HepG2 (cell line): ENCODE measurements at regions of chr22 and their contacts with region 1.

Region 1: GRCh38 chr22:37032546-37033460 is 13.3 kb downstream of the MPST start:
- DNase-seq: peak; percentile 100
- ATAC-seq: peak; percentile 92
- H3K4me3 ChIP-seq: peak overlapping the region; percentile 43 to 69 (median 51)
- H3K27ac ChIP-seq: peak overlapping the region; percentile 99
- H3K4me1 ChIP-seq: peaks cover 89% of the 10 kb centered on the region
- H3K27me3 ChIP-seq: no peaks in the 10 kb centered on the region
- CTCF ChIP-seq: no peak
- EP300 ChIP-seq: peak; percentile 87 to 99; a peak in 3 of 4 replicates
- POLR2A ChIP-seq: peak; percentile 87 to 91
- RAD21 ChIP-seq: 0 out of 2 replicates have a peak, but pooled peaks have one; percentile 3

Region 2: GRCh38 chr22:36823186-36823839 is 209.5 kb before region 1 on chr22:
- CTCF ChIA-PET with region 1: no interaction called
- POLR2A ChIA-PET with region 1: no interaction called
- in situ Hi-C with region 1: no loop called
- intact Hi-C with region 1: no loop called
- DNase-seq: no peak
- ATAC-seq: no peak
- H3K4me3 ChIP-seq: no peak overlapping the region
- H3K27ac ChIP-seq: no peak overlapping the region
- H3K4me1 ChIP-seq: no peaks in the 10 kb centered on the region
- H3K27me3 ChIP-seq: peaks cover 2 to 28% of the 10 kb centered on the region in 2 experiments; a peak in 3 of 5 replicates
- CTCF ChIP-seq: no peak
- EP300 ChIP-seq: no peak
- POLR2A ChIP-seq: no peak
- RAD21 ChIP-seq: no peak

Region 3: GRCh38 chr22:36998620-36999340 is 34.0 kb before region 1 on chr22:
- CTCF ChIA-PET with region 1: no interaction called
- POLR2A ChIA-PET with region 1: no interaction called
- in situ Hi-C with region 1: no loop called
- intact Hi-C with region 1: no loop called
- DNase-seq: no peak
- ATAC-seq: no peak
- H3K4me3 ChIP-seq: no peak overlapping the region
- H3K27ac ChIP-seq: no peak overlapping the region
- H3K4me1 ChIP-seq: peaks cover 6% of the 10 kb centered on the region; the same call in 1 of the 2 replicates
- H3K27me3 ChIP-seq: peaks cover 4 to 32% of the 10 kb centered on the region in 2 experiments; a peak in 4 of 5 replicates
- CTCF ChIP-seq: no peak; the same call in 1 of the 2 replicates
- EP300 ChIP-seq: no peak
- POLR2A ChIP-seq: no peak
- RAD21 ChIP-seq: no peak

Region 4: GRCh38 chr22:37043828-37044538 is 11.2 kb after region 1 on chr22:
- CTCF ChIA-PET with region 1: interaction called, 3 read pairs
- POLR2A ChIA-PET with region 1: interaction called, 227 read pairs
- in situ Hi-C with region 1: no loop called
- intact Hi-C with region 1: loop called (anchors 2 kb)
- DNase-seq: peak; percentile 77
- ATAC-seq: peak; percentile 95
- H3K4me3 ChIP-seq: peak overlapping the region in 2 of 3 experiments; percentile 38 to 62; a peak in 5 of 6 replicates
- H3K27ac ChIP-seq: peak overlapping the region; percentile 78
- H3K4me1 ChIP-seq: peaks cover 84% of the 10 kb centered on the region
- H3K27me3 ChIP-seq: 0 out of 5 replicates have a peak, but pooled peaks cover 0 to under 1% of the 10 kb centered on the region in 2 experiments
- CTCF ChIP-seq: peak; percentile 97
- EP300 ChIP-seq: peak in 1 of 2 experiments; percentile 4; a peak in 2 of 4 replicates
- POLR2A ChIP-seq: peak in 1 of 2 experiments; percentile 62; a peak in 2 of 4 replicates
- RAD21 ChIP-seq: peak; percentile 93

Region 5: GRCh38 chr22:37051391-37052385 is 18.9 kb after region 1 on chr22 and contains the start of gene KCTD17:
- CTCF ChIA-PET with region 1: no interaction called
- POLR2A ChIA-PET with region 1: interaction called, 227 read pairs
- in situ Hi-C with region 1: no loop called
- intact Hi-C with region 1: no loop called
- DNase-seq: no peak
- ATAC-seq: peak; percentile 86
- H3K4me3 ChIP-seq: peak within 1 kb of the TSS; percentile 51 to 71 (median 54)
- H3K27ac ChIP-seq: no peak within 1 kb of the TSS
- H3K4me1 ChIP-seq: peaks cover 51% of the 10 kb centered on the region
- H3K27me3 ChIP-seq: peaks cover 0 to 13% of the 10 kb centered on the region in 2 experiments; a peak in 2 of 5 replicates
- CTCF ChIP-seq: no peak
- EP300 ChIP-seq: no peak
- POLR2A ChIP-seq: no peak
- RAD21 ChIP-seq: no peak
- total RNA-seq, gene KCTD17: 4.5 and 5.3 TPM in 2 replicates

Region 6: DNA sequence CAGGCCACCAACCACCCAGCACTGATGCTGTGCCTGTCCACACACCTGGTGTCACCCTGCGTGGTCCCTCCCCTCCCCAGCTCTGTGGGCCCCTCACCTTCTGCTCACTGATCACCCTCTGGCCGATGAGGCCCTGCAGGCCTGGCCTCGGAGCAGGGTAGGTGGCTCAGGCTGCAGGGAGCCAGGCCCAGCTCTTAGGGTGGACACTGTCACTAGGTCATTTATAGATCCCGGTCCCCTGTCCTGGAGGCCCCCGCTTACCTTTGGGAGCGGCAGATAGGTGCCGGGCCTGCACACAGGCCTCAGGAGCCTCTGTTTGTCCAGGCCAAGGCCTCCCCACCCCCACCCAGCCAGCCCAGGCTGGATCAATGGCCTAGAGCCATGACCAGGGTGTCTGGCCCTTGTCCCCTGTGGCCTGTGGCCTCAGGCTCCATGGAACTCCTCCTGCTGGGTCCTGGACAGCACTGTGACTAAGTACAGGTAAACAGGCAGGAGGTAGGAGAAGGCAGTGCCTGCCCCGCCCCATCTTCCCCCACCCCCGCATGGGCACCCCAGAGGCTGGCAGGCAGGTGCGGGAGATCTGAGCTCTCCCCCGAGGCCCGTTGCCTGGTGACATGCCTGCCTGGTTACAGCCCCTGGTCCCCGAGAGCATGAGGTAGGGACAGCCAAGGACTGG is 76.6 kb after region 1 on chr22 and contains the start of gene TMPRSS6:
- CTCF ChIA-PET with region 1: no interaction called
- POLR2A ChIA-PET with region 1: no interaction called
- in situ Hi-C with region 1: no loop called
- intact Hi-C with region 1: loop called (anchors 2 kb)
- DNase-seq: peak; percentile 70
- ATAC-seq: peak; percentile 84
- H3K4me3 ChIP-seq: peak within 1 kb of the TSS; percentile 37 to 72 (median 44); a peak in 5 of 6 replicates
- H3K27ac ChIP-seq: peak within 1 kb of the TSS; percentile 86
- H3K4me1 ChIP-seq: peaks cover 79% of the 10 kb centered on the region
- H3K27me3 ChIP-seq: peaks cover 0 to 1% of the 10 kb centered on the region in 2 experiments; a peak in 2 of 5 replicates
- CTCF ChIP-seq: peak; percentile 42; the same call in 1 of the 2 replicates
- EP300 ChIP-seq: peak in 1 of 2 experiments; percentile 76; a peak in 1 of 4 replicates
- POLR2A ChIP-seq: no peak
- RAD21 ChIP-seq: peak; percentile 55
- total RNA-seq, gene TMPRSS6: 1.5 and 4.2 TPM in 2 replicates